ENCODE measurements at regions of chr18 and their contacts with region 1.

Region 1: GRCh38 chr18:3665780-3666525 is 216.0 kb downstream of the TGIF1 start:
- DNase-seq: peak; percentile 77 to 94 (median 87)
- H3K4me3 ChIP-seq: peak overlapping the region in 1 of 4 donors; percentile 14
- H3K27ac ChIP-seq: peak overlapping the region; percentile 33 to 85 (median 71)
- H3K4me1 ChIP-seq: peaks cover 7 to 13% of the 10 kb centered on the region in 2 donors
- H3K27me3 ChIP-seq: no peaks in the 10 kb centered on the region
- CTCF ChIP-seq: peak; percentile 90 to 98 (median 98)
- POLR2A ChIP-seq: peak in 1 of 2 donors; percentile 22

Region 2: GRCh38 chr18:3281456-3282400 is 384.2 kb before region 1 on chr18:
- intact Hi-C with region 1: loop called (anchors 5 kb)
- DNase-seq: no peak
- H3K4me3 ChIP-seq: no peak overlapping the region
- H3K27ac ChIP-seq: no peak overlapping the region
- H3K4me1 ChIP-seq: peaks cover 5 to 7% of the 10 kb centered on the region in 2 donors
- H3K27me3 ChIP-seq: no peaks in the 10 kb centered on the region
- CTCF ChIP-seq: peak; percentile 59 to 92 (median 74)
- POLR2A ChIP-seq: no peak

Region 3: GRCh38 chr18:3441290-3441689 is 224.7 kb before region 1 on chr18:
- intact Hi-C with region 1: loop called in 1 of 2 experiments (anchors 5 kb)
- DNase-seq: peak in 6 of 7 donors; percentile 43 to 65 (median 52)
- H3K4me3 ChIP-seq: no peak overlapping the region
- H3K27ac ChIP-seq: no peak overlapping the region
- H3K4me1 ChIP-seq: peaks cover under 1 to 7% of the 10 kb centered on the region in 2 donors
- H3K27me3 ChIP-seq: no peaks in the 10 kb centered on the region
- CTCF ChIP-seq: peak in 5 of 6 experiments; percentile 33 to 54 (median 49)
- POLR2A ChIP-seq: no peak

Region 4: DNA sequence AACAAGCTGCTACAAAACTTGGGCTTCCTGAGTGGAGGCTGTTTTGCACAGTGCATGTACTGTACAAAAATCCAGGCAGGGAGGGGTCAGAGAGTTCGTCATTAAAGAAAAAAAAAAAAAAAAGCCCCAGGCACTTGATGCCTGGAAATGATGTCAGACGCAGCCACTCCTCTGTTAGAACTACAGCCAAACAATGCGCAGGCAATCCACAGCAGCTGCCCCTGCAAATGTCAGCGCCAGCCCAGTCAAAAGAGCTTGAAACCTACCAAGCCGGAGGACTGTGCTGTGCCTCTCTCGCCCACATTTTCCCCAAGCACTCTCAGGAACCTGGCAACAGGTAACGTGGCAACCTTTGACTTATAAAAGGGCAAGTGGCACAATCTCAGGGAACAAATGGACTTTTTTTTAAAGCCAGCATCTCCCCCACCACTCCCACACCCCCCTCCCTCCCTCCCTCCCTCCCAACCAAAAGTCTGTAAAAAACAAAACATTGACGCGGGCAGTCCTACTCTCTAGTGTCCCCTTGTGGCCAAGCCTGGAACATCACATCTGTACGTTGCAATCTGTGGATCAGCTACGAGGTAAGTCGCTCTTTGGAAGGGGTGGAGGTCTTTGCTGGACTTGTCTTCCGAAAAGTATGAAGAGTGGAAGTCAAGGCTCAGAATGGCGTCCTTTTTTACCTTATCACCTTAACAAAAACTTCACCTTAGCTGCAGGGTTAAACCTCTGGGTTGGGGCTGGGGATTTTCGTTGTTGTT is 71.9 kb before region 1 on chr18:
- intact Hi-C with region 1: loop called in 1 of 2 experiments (anchors 10 kb)
- DNase-seq: peak; percentile 89 to 98 (median 95)
- H3K4me3 ChIP-seq: peak overlapping the region in 3 of 4 donors; percentile 1 to 59 (median 19)
- H3K27ac ChIP-seq: peak overlapping the region; percentile 93 to 98 (median 96)
- H3K4me1 ChIP-seq: peaks cover 45 to 51% of the 10 kb centered on the region in 2 donors
- H3K27me3 ChIP-seq: no peaks in the 10 kb centered on the region
- CTCF ChIP-seq: peak; percentile 84 to 94 (median 92)
- POLR2A ChIP-seq: peak; percentile 77 to 90

Measured in adrenal gland (tissue), 19 donors.